ENCODE measurements at regions of chr9 and their contacts with region 1.

Region 1: GRCh38 chr9:19174127-19174912 is 47.0 kb upstream of the PLIN2 start:
- DNase-seq: peak; percentile 34 to 56 (median 46)
- H3K4me3 ChIP-seq: no peak overlapping the region
- H3K4me3 Mint-ChIP-seq: peak overlapping the region in 1 of 8 donors; percentile 43
- H3K27ac ChIP-seq: no peak overlapping the region
- H3K27ac Mint-ChIP-seq: peak overlapping the region in 5 of 7 donors; percentile 25 to 83 (median 66)
- H3K4me1 ChIP-seq: peaks cover 18% of the 10 kb centered on the region
- H3K4me1 Mint-ChIP-seq: peaks cover 18 to 35% (median 26%) of the 10 kb centered on the region in 4 donors
- H3K27me3 ChIP-seq: no peaks in the 10 kb centered on the region
- H3K27me3 Mint-ChIP-seq: no peaks in the 10 kb centered on the region

Region 2: DNA sequence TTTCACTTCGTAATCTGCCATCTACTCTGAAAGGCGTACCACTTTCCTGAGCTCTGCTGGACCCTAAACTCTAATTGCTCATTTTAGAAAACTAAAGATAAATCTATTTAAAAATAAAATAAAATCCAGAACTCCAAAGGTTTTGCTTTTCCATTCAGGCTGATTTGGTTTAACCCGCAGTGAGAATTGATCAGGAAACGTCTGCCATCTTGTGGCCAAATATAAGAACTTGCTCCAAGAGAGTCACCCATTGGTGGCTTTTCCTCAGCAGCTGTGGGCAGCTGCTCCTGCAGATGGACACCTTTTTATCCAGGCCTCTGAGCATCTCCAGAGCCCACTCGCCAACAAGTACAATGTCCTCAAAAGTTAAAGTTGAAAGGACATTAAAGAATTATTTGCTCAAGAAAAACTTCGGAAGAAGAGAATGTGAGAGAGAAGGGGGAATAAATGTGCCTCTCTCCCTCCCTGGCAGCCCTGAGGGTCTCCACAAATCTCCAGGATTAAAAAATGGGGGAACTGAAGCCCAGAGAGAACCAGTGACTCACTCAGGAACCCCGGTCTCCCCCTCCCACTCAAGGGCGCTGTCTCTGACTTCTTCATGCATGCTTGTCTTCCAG is 145.4 kb before region 1 on chr9:
- CTCF ChIA-PET with region 1: interaction called, 11 read pairs
- POLR2A ChIA-PET with region 1: no interaction called
- intact Hi-C with region 1: no loop called
- DNase-seq: peak in 4 of 5 donors; percentile 21 to 35 (median 24)
- H3K4me3 ChIP-seq: no peak overlapping the region
- H3K4me3 Mint-ChIP-seq: peak overlapping the region in 1 of 8 donors; percentile 37
- H3K27ac ChIP-seq: no peak overlapping the region
- H3K27ac Mint-ChIP-seq: no peak overlapping the region
- H3K4me1 ChIP-seq: no peaks in the 10 kb centered on the region
- H3K4me1 Mint-ChIP-seq: peaks cover 0 to 2% (median 0%) of the 10 kb centered on the region in 4 donors
- H3K27me3 ChIP-seq: peaks cover 4% of the 10 kb centered on the region
- H3K27me3 Mint-ChIP-seq: peaks cover 4 to 11% of the 10 kb centered on the region in 2 donors

Region 3: DNA sequence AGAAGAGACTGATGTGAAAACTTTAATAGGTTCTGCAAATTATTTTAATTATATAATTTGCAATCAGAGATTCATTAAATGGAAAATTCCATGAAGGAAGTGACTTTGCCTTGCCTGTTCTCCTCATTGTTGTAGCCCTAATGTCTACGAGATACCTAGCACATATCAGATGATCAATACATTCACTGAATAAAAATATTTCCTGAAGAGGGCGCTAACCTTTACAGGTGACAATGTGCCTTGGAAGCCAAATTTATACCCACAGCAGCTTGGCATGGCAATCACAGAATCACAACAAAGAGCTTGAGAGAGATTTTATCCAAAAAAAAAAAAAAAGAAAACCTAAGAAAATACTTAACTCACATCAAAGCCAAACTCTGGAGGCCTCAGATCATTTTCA is 89.0 kb before region 1 on chr9:
- CTCF ChIA-PET with region 1: interaction called, 192 read pairs
- POLR2A ChIA-PET with region 1: interaction called, 3 read pairs
- intact Hi-C with region 1: loop called (anchors 1 kb)
- DNase-seq: peak in 4 of 5 donors; percentile 49 to 65 (median 54)
- H3K4me3 ChIP-seq: no peak overlapping the region
- H3K4me3 Mint-ChIP-seq: no peak overlapping the region
- H3K27ac ChIP-seq: no peak overlapping the region
- H3K27ac Mint-ChIP-seq: peak overlapping the region in 2 of 7 donors; percentile 19 to 58
- H3K4me1 ChIP-seq: no peaks in the 10 kb centered on the region
- H3K4me1 Mint-ChIP-seq: peaks cover 0 to 4% (median 3%) of the 10 kb centered on the region in 4 donors
- H3K27me3 ChIP-seq: no peaks in the 10 kb centered on the region
- H3K27me3 Mint-ChIP-seq: no peaks in the 10 kb centered on the region

Region 4: DNA sequence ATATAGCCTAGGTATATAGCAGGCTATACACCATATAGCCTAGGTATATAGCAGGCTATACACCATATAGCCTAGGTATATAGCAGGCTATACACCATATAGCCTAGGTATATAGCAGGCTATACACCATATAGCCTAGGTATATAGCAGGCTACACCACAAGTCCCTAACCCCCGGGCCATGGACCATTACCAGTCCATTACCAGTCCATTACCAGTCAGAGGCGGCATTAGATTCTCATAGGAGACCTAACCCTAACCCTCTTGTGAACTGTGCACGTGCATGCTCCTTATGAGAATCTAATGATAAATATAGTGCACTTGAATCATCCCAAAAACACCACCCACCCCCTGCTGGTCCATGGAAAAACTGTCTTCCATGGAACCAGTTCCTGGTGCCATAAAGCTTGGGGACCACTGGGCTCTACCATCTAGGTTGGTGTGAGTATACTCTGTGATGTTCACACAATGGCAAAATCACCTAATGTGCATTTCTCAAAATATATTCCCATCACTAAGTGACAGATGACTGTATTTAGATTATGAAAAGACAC is 51.8 kb before region 1 on chr9:
- CTCF ChIA-PET with region 1: interaction called, 23 read pairs
- POLR2A ChIA-PET with region 1: no interaction called
- intact Hi-C with region 1: loop called (anchors 1 kb)
- DNase-seq: no peak
- H3K4me3 ChIP-seq: no peak overlapping the region
- H3K4me3 Mint-ChIP-seq: no peak overlapping the region
- H3K27ac ChIP-seq: no peak overlapping the region
- H3K27ac Mint-ChIP-seq: peak overlapping the region in 5 of 7 donors; percentile 31 to 95 (median 84)
- H3K4me1 ChIP-seq: peaks cover 44% of the 10 kb centered on the region
- H3K4me1 Mint-ChIP-seq: peaks cover 25 to 64% (median 47%) of the 10 kb centered on the region in 4 donors
- H3K27me3 ChIP-seq: no peaks in the 10 kb centered on the region
- H3K27me3 Mint-ChIP-seq: no peaks in the 10 kb centered on the region

Region 5: DNA sequence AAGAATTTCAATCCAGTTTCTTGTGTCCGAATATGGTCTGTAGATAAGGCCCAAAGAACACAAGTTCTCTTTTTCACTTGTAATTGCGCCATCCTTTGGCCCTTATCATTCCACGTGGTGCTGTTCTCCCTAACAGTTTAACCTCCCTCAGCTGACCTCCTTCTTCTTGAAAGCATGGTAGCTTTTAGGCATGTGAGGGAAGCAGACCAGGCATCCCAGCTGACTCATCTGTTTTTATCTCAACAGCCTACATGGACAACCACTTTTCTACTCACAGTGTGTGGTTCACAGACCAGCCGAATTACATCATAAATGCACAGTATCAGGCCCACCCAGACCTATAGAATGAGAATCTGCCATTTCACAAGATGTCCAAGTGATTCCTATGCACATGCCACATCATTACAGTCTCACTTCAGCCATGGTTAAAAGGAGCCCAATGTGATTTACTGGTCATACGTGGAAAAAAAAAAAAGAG is 20.1 kb before region 1 on chr9:
- CTCF ChIA-PET with region 1: interaction called, 16 read pairs
- POLR2A ChIA-PET with region 1: no interaction called
- intact Hi-C with region 1: no loop called
- DNase-seq: no peak
- H3K4me3 ChIP-seq: no peak overlapping the region
- H3K4me3 Mint-ChIP-seq: no peak overlapping the region
- H3K27ac ChIP-seq: no peak overlapping the region
- H3K27ac Mint-ChIP-seq: peak overlapping the region in 1 of 7 donors; percentile 14
- H3K4me1 ChIP-seq: peaks cover 12% of the 10 kb centered on the region
- H3K4me1 Mint-ChIP-seq: peaks cover 7 to 15% (median 10%) of the 10 kb centered on the region in 4 donors
- H3K27me3 ChIP-seq: no peaks in the 10 kb centered on the region
- H3K27me3 Mint-ChIP-seq: no peaks in the 10 kb centered on the region

Region 6: DNA sequence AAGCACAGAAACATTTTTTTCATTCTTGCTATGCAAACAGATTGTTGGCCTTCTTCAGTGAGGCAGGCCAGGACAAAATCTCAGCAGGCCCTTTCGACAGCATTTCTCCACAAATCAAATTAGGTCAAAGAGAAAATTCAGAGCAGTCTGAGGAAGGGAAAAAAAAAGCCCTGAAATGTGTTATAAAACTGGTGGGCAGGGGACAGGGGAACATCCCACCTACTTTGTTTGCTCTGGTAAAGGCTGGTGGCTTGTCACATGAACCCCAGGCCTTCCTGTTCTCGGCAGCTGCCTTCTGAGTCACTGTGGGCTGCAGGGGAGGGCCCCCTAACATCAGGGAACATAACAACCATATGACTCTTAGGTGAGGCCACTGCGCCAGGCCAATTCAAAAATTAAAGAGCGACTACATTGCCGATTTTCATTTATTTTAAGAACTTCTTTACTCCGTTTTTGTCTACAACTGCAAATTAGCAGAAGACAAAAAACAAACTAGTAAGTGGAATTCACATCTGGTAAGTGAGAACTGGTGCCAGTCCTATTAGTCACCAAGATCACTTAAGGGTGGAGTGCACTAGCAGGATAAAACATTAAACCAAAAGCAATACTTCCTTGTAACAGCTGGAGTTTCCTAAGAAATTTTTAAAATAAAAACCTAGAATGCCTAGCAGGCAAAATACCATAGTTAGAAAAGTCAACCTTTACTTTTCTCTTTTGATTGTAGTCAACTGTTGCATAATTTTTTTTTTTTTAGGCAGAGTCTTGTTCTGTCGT is 10.0 kb after region 1 on chr9:
- CTCF ChIA-PET with region 1: interaction called, 24 read pairs
- POLR2A ChIA-PET with region 1: interaction called, 8 read pairs
- intact Hi-C with region 1: no loop called
- DNase-seq: peak; percentile 57 to 90 (median 73)
- H3K4me3 ChIP-seq: no peak overlapping the region
- H3K4me3 Mint-ChIP-seq: peak overlapping the region in 7 of 8 donors; percentile 26 to 73 (median 51)
- H3K27ac ChIP-seq: peak overlapping the region; percentile 60
- H3K27ac Mint-ChIP-seq: peak overlapping the region; percentile 89 to 97 (median 95)
- H3K4me1 ChIP-seq: peaks cover 22% of the 10 kb centered on the region
- H3K4me1 Mint-ChIP-seq: peaks cover 9 to 20% (median 15%) of the 10 kb centered on the region in 4 donors
- H3K27me3 ChIP-seq: no peaks in the 10 kb centered on the region
- H3K27me3 Mint-ChIP-seq: no peaks in the 10 kb centered on the region

Region 7: GRCh38 chr9:19456996-19457692 is 282.8 kb after region 1 on chr9:
- CTCF ChIA-PET with region 1: interaction called, 8 read pairs
- POLR2A ChIA-PET with region 1: no interaction called
- intact Hi-C with region 1: loop called (anchors 2 kb)
- DNase-seq: peak; percentile 58 to 67 (median 64)
- H3K4me3 ChIP-seq: no peak overlapping the region
- H3K4me3 Mint-ChIP-seq: peak overlapping the region in 5 of 8 donors; percentile 40 to 60 (median 47)
- H3K27ac ChIP-seq: no peak overlapping the region
- H3K27ac Mint-ChIP-seq: peak overlapping the region in 1 of 7 donors; percentile 11
- H3K4me1 ChIP-seq: peaks cover 6% of the 10 kb centered on the region
- H3K4me1 Mint-ChIP-seq: peaks cover 5 to 9% (median 6%) of the 10 kb centered on the region in 4 donors
- H3K27me3 ChIP-seq: no peaks in the 10 kb centered on the region
- H3K27me3 Mint-ChIP-seq: peaks cover 0 to 1% of the 10 kb centered on the region in 2 donors